Stomach (tissue), 19 donors: ENCODE measurements at regions of chr4 and their contacts with region 1.

Region 1: DNA sequence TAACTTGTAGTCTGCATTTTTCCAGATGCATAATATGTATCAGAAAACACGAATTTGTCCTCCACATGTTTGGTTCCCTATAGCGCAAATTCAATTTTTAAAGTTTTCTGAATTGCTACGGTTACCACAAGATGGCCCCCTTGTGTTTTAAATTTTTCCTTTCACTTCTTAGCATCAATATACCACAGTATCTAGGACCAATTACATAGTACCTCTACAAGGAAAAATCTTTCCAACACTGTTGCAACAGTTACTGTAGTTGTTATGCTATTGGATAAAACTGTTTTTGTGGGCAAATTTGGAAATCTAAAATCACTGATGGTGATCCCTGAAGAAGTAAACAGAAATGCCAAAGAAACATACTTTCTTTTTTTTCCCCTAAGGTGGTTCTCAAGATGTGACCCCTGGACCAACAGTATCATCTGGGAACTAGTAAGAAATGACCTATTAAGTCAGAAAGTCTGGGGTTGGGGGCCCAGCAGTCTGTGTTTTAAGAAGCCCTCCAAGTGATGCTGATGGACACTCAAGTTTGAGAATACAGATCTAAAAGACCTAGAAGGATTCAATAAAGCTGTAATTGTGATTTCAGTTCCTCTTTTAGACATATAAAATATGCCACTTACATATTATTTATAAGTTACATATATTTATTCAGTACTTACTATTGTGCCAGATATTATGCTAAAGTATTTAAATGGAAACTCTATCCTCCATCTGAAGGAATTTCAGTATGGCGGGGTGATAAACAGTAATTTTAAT is 3.1 kb downstream of the ZGRF1 start:
- DNase-seq: peak in 1 of 2 donors; percentile 61
- H3K4me3 ChIP-seq: no peak overlapping the region
- H3K27ac ChIP-seq: no peak overlapping the region
- H3K4me1 ChIP-seq: peaks cover 6 to 22% (median 14%) of the 10 kb centered on the region in 4 donors
- H3K27me3 ChIP-seq: no peaks in the 10 kb centered on the region
- CTCF ChIP-seq: peak in 2 of 7 experiments; percentile 17 to 25
- EP300 ChIP-seq: no peak
- POLR2A ChIP-seq: no peak

Region 2: GRCh38 chr4:112765317-112765975 is 131.8 kb after region 1 on chr4:
- intact Hi-C with region 1: loop called (anchors 5 kb)
- DNase-seq: peak in 1 of 2 donors; percentile 31
- H3K4me3 ChIP-seq: no peak overlapping the region
- H3K27ac ChIP-seq: no peak overlapping the region
- H3K4me1 ChIP-seq: peaks cover 0 to 6% (median 3%) of the 10 kb centered on the region in 4 donors
- H3K27me3 ChIP-seq: no peaks in the 10 kb centered on the region
- CTCF ChIP-seq: peak in 1 of 7 experiments; percentile 9
- EP300 ChIP-seq: no peak
- POLR2A ChIP-seq: no peak